ENCODE measurements at regions of chrX and their contacts with region 1.

Region 1: GRCh38 chrX:11499076-11500044 is 166.4 kb downstream of the ARHGAP6 start:
- DNase-seq: no peak

Region 2: GRCh38 chrX:11180571-11180970 is 318.8 kb before region 1 on chrX:
- intact Hi-C with region 1: no loop called
- DNase-seq: no peak

Region 3: DNA sequence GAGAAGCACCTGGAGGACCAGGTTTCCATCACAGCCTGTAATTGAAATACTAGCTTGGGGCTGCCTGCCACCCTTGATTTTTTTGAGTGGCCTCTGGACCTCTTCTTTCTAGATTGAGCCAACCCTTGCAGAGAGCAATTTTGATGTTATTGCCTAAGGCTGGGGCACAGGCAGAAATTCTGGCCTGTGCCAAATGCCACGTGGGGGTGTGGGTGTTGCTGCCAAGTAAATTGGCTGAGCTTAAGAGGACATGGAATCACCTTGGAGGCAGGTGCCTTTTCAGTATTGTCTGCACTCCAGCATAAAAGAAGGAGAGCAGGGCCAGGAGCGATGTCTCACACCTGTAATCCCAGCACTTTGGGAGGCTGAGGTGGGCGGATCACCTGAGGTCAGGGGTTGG is 1005.8 kb after region 1 on chrX:
- intact Hi-C with region 1: loop called in 1 of 2 experiments (anchors 10 kb)
- DNase-seq: no peak

Measured in posterior vena cava (tissue), 2 donors.